WTC11 (cell line): ENCODE measurements at regions of chr12 and their contacts with region 1.

Region 1: DNA sequence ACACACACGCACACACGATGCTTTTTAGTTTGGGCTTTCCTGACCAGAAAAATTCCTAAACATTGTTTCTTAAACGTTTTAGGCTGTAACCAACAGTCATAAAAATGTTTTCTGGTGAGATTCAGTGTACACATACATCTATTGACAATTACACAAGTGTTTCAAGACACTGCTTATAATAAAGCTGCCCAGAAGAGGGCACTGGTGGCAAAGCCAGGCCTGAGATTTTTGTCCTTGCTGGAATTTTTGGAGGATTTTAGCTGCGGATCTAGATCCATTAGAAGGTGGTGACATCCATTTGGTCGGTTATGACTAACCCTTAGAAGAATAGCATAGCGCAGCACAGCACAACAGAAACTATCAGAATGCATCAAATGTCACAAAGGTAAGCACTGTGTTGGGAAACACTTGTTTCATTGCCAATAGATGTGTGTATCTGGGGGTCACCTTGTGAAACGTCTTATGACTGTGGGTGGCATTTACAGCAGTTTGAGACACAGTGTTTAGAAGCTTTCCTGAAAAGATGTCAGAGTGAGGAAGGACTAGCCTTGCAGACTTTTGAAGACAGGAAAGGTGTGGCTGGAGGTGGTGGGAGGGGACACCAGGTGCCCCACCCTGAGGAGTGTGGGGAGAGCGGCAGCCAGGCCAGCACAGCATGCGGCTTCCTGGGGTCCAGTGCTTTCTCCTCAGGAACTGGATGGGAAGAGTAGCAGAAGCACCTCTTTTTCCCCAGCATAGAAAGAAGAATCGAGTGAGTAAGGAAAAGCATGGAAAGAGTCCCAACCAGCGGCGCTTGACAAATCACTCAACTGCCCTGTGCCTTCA is 54.7 kb upstream of the FKBP4 start:
- DNase-seq: no peak
- ATAC-seq: peak; percentile 27
- H3K4me3 Mint-ChIP-seq: no peak overlapping the region
- H3K27ac Mint-ChIP-seq: no peak overlapping the region
- H3K4me1 Mint-ChIP-seq: peaks cover 11% of the 10 kb centered on the region
- H3K27me3 Mint-ChIP-seq: no peaks in the 10 kb centered on the region; the same call in 1 of the 2 replicates
- CTCF ChIP-seq: 0 out of 2 replicates have a peak, but pooled peaks have one; percentile 32

Region 2: GRCh38 chr12:2294651-2295475 is 445.2 kb before region 1 on chr12:
- CTCF ChIA-PET with region 1: no interaction called
- POLR2A ChIA-PET with region 1: no interaction called
- DNase-seq: no peak
- ATAC-seq: no peak
- H3K4me3 Mint-ChIP-seq: no peak overlapping the region
- H3K27ac Mint-ChIP-seq: no peak overlapping the region
- H3K4me1 Mint-ChIP-seq: peaks cover 35% of the 10 kb centered on the region
- H3K27me3 Mint-ChIP-seq: no peaks in the 10 kb centered on the region
- CTCF ChIP-seq: no peak

Region 3: GRCh38 chr12:2677142-2677880 is 62.7 kb before region 1 on chr12:
- CTCF ChIA-PET with region 1: no interaction called
- POLR2A ChIA-PET with region 1: no interaction called
- DNase-seq: no peak
- ATAC-seq: no peak
- H3K4me3 Mint-ChIP-seq: no peak overlapping the region
- H3K27ac Mint-ChIP-seq: no peak overlapping the region
- H3K4me1 Mint-ChIP-seq: no peaks in the 10 kb centered on the region; the same call in 1 of the 2 replicates
- H3K27me3 Mint-ChIP-seq: no peaks in the 10 kb centered on the region
- CTCF ChIP-seq: no peak

Region 4: DNA sequence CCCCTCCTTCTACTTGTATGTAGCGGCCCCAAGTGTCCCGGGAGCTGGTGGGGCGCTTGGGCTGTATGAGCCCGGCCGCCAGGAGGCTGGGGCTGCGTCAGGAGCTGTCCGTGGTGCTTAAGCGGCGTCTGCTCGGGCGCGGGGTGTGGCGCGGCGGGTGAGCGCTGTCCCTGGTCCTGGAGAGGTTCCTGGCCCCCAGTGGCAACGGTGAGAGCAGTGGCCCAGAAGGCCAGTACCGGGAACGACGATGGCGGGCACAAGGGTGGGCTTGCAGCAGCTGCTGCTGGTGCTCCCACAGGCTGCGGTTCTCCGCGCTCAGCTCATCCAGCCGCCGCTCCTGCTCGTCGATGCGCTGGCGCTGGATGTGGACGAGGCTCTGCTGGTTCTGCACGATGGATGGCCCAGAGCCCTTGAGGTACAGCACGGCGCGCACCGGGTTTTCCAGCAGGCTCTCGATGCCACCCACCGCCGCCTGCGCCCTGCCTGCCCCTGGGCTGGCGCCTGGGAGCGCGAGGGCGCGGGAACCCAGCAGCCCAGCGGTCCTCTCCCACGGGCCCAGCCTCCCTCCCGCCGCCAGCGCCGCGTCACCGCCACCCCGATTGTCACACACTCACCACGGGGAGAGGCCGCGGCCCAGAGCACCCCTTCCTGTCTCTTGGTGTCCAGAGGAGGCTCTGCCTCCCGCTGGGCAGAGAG is 12.8 kb after region 1 on chr12:
- CTCF ChIA-PET with region 1: interaction called, 95 read pairs
- POLR2A ChIA-PET with region 1: no interaction called
- DNase-seq: peak; percentile 93
- ATAC-seq: peak; percentile 87
- H3K4me3 Mint-ChIP-seq: peak overlapping the region; percentile 58; the same call in 1 of the 2 replicates
- H3K27ac Mint-ChIP-seq: no peak overlapping the region
- H3K4me1 Mint-ChIP-seq: peaks cover 62% of the 10 kb centered on the region
- H3K27me3 Mint-ChIP-seq: peaks cover 43% of the 10 kb centered on the region
- CTCF ChIP-seq: no peak

Region 5: DNA sequence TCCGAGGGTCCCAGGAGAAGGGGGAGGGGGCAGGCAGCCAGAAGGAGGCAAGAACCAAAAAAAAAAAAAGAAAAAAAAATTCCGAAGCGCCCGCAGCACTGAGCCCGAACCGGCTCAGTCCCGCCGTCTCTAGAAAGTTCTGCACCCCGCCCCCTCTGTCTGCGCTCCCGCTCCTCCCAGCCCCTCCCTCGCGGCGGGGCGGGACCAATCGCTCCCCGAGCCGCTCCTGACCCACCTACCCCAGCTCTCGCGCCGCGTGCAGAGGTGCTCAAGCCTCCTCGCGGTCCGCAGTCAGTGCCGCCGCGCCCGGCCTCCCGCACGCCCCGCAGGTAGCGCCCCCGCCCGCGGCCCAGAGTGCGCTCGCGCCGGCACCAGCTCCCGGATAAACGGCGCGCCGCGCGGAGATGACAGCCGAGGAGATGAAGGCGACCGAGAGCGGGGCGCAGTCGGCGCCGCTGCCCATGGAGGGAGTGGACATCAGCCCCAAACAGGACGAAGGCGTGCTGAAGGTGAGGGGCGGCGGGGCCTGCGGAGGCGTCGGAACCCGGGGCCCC is 54.8 kb after region 1 on chr12 and contains the start of gene FKBP4:
- CTCF ChIA-PET with region 1: interaction called, 10 read pairs
- POLR2A ChIA-PET with region 1: no interaction called
- DNase-seq: peak; percentile 93
- ATAC-seq: peak; percentile 85
- H3K4me3 Mint-ChIP-seq: peak within 1 kb of the TSS; percentile 84
- H3K27ac Mint-ChIP-seq: no peak within 1 kb of the TSS
- H3K4me1 Mint-ChIP-seq: peaks cover 36% of the 10 kb centered on the region
- H3K27me3 Mint-ChIP-seq: no peaks in the 10 kb centered on the region
- CTCF ChIP-seq: no peak
- total RNA-seq, gene FKBP4: 245 to 257 TPM (median 249 TPM) in 3 replicates

Region 6: DNA sequence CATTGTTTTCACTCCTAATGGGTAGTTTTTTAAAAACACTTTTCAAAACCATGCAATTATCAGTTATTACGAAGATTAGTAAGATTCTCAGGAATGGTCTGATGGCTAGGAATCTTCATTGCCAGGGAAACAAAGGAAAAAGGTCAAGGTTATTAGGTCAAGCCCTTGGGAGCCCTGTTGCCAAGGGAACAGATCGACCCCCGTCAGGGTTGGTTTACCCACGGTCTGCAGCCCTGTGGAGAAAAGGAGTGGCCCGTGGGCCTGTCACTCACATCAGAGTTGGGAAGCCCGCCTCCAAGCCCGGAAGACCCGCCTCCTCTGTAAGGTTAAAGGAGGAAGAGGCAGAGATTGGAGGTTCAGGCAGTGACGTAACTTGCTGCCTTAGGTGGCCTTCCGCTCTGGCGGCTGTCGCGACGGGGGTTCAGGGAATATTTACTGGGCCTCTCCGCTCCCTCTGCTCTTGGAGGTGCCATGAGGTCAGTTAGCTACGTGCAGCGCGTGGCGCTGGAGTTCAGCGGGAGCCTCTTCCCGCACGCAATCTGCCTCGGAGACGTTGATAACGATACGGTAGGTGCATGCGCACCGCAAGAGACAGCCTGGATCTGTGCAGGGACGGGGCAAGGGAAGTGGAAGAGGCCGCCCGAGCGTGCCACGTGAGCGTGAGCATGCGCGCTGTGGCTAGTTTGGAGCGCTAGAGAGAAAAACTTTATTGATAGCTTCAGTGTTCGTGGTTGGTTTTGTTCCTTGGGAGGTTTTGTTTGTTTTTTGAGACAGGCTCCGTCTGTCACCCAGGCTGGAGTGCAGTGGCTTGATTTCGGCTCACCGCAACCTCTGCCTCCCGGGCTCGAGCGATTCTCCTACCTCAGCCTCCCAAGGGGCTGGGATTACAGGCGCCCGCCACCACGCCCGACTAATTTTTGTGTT is 72.5 kb after region 1 on chr12 and contains the start of gene ITFG2:
- CTCF ChIA-PET with region 1: interaction called, 10 read pairs
- POLR2A ChIA-PET with region 1: no interaction called
- DNase-seq: peak; percentile 99
- ATAC-seq: peak; percentile 99
- H3K4me3 Mint-ChIP-seq: peak within 1 kb of the TSS; percentile 99
- H3K27ac Mint-ChIP-seq: peak within 1 kb of the TSS; percentile 100
- H3K4me1 Mint-ChIP-seq: peaks cover 13% of the 10 kb centered on the region
- H3K27me3 Mint-ChIP-seq: no peaks in the 10 kb centered on the region
- CTCF ChIP-seq: no peak; the same call in 1 of the 2 replicates
- total RNA-seq, gene ITFG2: 23.9 to 26.0 TPM (median 25.4 TPM) in 3 replicates